ENCODE measurements at regions of chr11 and their contacts with region 1.

Region 1: GRCh38 chr11:122045181-122045586 is 70.8 kb downstream of the BLID start:
- DNase-seq: no peak
- ATAC-seq: no peak
- H3K4me3 ChIP-seq: no peak overlapping the region
- H3K27ac ChIP-seq: peak overlapping the region in 1 of 2 donors; percentile 82
- H3K4me1 ChIP-seq: peaks cover 2 to 3% of the 10 kb centered on the region in 2 donors
- H3K27me3 ChIP-seq: no peaks in the 10 kb centered on the region

Region 2: DNA sequence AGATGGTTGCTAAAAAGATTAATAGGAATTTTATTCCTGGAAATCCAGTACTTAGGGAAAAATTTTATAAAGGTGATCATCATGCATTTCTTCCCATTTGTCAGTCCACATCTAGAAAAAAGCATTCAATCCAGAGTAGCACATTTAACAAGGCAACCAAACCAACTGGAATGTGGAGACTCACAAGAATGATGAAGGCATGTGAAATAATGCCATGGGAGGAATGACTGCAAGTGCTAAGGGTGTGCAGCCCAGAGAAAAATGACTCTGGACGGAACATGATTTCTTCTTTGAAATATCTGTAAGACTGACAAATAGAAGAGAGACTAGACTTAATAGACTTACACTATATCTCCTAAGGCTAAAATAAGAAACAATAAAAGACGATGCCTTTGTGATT is 37.0 kb after region 1 on chr11:
- intact Hi-C with region 1: loop called (anchors 5 kb)
- DNase-seq: no peak
- ATAC-seq: no peak
- H3K4me3 ChIP-seq: no peak overlapping the region
- H3K27ac ChIP-seq: no peak overlapping the region
- H3K4me1 ChIP-seq: peaks cover 2 to 6% of the 10 kb centered on the region in 2 donors
- H3K27me3 ChIP-seq: no peaks in the 10 kb centered on the region

Region 3: DNA sequence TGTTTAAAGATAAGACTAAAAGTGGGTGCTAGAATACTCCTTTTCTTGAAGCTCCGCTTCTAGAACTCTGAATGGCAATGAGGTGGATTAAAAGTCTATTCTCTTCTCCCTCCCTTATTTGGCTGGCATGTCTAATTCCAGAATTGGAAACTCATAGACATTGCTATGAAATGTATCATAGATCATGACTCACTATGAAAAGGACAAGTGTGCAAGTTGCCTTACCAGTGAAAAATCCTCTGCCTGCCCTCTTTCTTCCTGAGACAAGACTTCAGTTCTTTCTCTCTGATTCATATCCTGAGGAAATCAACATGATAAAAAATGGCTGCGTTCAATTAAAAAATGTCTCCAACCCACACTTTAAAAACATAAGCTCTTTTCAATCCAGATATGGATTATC is 144.0 kb after region 1 on chr11:
- intact Hi-C with region 1: loop called in 1 of 2 experiments (anchors 5 kb)
- DNase-seq: no peak
- ATAC-seq: peak; percentile 88
- H3K4me3 ChIP-seq: no peak overlapping the region
- H3K27ac ChIP-seq: peak overlapping the region in 1 of 2 donors; percentile 90
- H3K4me1 ChIP-seq: peaks cover 3% of the 10 kb centered on the region in 2 donors
- H3K27me3 ChIP-seq: no peaks in the 10 kb centered on the region

Region 4: GRCh38 chr11:122197055-122197987 is 152.1 kb after region 1 on chr11:
- intact Hi-C with region 1: loop called (anchors 5 kb)
- DNase-seq: peak; percentile 73 to 76
- ATAC-seq: peak; percentile 87
- H3K4me3 ChIP-seq: no peak overlapping the region
- H3K27ac ChIP-seq: peak overlapping the region; percentile 66 to 68
- H3K4me1 ChIP-seq: peaks cover 10 to 14% of the 10 kb centered on the region in 2 donors
- H3K27me3 ChIP-seq: no peaks in the 10 kb centered on the region

Region 5: GRCh38 chr11:122242731-122243130 is 197.5 kb after region 1 on chr11:
- intact Hi-C with region 1: no loop called
- DNase-seq: peak in 1 of 2 donors; percentile 52
- ATAC-seq: no peak
- H3K4me3 ChIP-seq: no peak overlapping the region
- H3K27ac ChIP-seq: no peak overlapping the region
- H3K4me1 ChIP-seq: no peaks in the 10 kb centered on the region
- H3K27me3 ChIP-seq: no peaks in the 10 kb centered on the region

Region 6: DNA sequence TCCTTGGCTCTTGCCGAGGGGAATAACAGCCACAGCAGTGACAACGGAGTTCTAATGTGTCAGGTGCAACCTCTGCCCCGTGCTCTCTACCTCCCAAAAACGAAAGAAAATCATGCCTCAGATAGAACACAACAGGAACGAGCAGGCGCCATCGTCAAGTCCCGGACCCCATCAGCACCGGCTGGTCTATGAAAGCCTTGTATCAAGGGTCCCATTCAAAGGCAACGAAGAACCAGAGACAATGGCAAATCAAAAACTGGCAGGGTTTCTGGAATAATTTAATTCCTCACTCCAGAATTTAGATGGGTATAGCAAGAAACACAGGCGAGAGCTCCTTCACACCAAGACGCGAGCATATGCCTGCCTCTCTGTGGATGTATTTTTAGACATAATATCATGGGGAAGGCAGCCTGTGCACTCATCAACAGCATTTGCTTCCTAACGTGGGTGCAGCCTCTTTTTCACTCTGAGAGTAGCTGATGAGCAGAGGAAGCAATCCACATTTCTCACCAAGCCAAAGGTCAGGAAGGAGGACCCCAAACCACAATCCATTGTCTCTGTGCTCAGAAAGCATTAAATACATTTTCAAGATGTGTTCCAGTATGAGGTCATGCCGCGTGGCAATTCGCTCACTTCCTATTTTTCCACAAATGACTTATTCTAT is 264.2 kb after region 1 on chr11:
- intact Hi-C with region 1: no loop called
- DNase-seq: peak in 1 of 2 donors; percentile 55
- ATAC-seq: no peak
- H3K4me3 ChIP-seq: peak overlapping the region; percentile 44 to 86
- H3K27ac ChIP-seq: peak overlapping the region; percentile 31 to 97
- H3K4me1 ChIP-seq: peaks cover 1 to 11% of the 10 kb centered on the region in 2 donors
- H3K27me3 ChIP-seq: no peaks in the 10 kb centered on the region

Measured in aorta (tissue), 5 donors.